Activated CD8-positive, alpha-beta T cell treated with anti-CD3 and anti-CD28 coated beads, Interleukin-2, amount 10 ng/mL, durations not matched to agents 7 days and 5 days (primary cell): ENCODE measurements at regions of chr10 and their contacts with region 1.

Region 1: DNA sequence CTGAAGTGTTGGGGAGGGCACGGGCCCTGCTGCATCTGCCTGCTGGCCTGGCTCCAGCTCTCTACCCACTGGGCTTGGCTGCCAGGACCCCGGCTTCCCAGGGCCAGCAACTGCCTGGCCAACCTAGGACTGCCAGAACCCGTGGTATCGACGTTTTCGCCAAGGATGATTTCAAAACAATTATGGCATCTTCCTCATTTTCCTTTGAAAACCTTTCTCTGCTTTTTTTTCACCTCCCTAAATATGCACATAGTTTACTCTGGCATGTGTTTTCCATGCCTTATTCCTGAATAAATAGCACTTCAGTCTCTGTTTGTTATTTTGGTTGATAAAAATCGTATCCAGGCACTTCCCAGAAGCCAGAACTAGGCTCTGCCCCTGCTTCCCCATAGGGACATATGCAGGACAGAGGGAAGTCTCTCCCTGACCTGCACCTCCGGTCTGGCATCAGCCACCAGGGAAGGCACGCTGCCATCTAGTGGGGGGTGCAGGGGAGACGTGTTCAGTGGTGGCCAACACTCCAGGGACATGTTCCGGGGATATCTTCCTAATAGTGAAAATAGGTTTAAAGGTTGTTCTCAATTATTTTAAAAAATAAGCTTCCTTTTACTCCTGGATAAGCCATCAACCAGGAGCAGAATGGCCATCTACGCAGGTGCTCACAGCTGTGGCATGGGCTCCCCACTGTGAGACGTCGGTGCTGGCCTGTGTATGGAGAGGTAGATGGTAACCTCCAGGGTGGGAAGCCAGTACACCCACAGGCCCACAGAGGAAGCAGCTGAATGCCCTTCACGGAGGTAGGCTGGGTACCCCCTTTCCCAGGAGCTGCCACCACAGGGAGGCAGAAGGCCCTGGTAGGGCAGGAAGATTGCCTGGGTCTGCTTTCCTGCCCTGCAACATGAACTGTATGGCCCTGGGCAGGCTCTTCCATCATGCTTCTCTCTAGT is 30.7 kb upstream of the ANTXRL start:
- DNase-seq: peak; percentile 59
- ATAC-seq: peak; percentile 78
- H3K4me3 Mint-ChIP-seq: no peak overlapping the region
- H3K27ac Mint-ChIP-seq: no peak overlapping the region
- H3K4me1 Mint-ChIP-seq: peaks cover 10% of the 10 kb centered on the region
- H3K27me3 Mint-ChIP-seq: no peaks in the 10 kb centered on the region

Region 2: DNA sequence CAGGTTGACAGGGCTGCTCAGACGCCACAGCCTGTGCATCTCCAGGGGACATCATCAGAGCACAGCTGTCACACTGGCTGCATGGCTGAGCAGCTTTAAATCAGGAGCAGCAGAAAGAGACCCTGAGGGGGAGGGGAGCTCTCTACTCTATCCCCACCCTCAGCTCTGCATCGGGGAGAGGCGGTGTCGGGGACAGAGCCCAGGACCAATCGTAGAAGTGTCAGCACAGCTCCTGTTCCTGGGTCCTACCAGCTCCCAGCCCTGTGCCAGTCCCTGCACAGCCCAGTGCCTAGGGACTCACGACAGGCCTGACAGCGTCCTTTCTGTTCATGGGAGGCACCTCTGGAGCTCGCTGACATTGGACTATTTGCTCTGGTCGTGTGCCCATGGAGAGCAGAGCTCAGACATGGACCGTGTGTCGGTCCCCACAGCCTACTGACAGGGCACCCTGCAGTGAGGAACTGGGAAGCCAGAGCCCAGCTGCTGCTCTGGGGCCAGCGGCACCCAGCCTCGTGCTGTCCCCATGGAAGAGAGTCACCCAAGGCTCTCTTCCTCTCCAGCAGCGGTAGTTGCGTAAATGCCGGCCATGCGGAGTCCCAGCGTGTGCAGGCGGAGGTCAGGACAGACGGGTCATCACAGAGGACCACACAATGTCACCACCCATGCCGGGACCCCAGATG is 10.4 kb after region 1 on chr10:
- CTCF ChIA-PET with region 1: interaction called, 11 read pairs
- POLR2A ChIA-PET with region 1: no interaction called
- DNase-seq: peak; percentile 18
- ATAC-seq: no peak
- H3K4me3 Mint-ChIP-seq: no peak overlapping the region
- H3K27ac Mint-ChIP-seq: peak overlapping the region; percentile 57
- H3K4me1 Mint-ChIP-seq: peaks cover 40% of the 10 kb centered on the region
- H3K27me3 Mint-ChIP-seq: no peaks in the 10 kb centered on the region

Region 3: GRCh38 chr10:46277840-46278239 is 21.8 kb after region 1 on chr10:
- CTCF ChIA-PET with region 1: no interaction called
- POLR2A ChIA-PET with region 1: no interaction called
- DNase-seq: no peak
- ATAC-seq: no peak
- H3K4me3 Mint-ChIP-seq: no peak overlapping the region
- H3K27ac Mint-ChIP-seq: no peak overlapping the region
- H3K4me1 Mint-ChIP-seq: peaks cover 20% of the 10 kb centered on the region
- H3K27me3 Mint-ChIP-seq: peaks cover 34% of the 10 kb centered on the region